Right cardiac atrium (tissue), 5 donors: ENCODE measurements at regions of chr2 and their contacts with region 1.

Region 1: GRCh38 chr2:177489719-177490301 is 97.2 kb downstream of the AGPS start:
- DNase-seq: no peak
- ATAC-seq: no peak
- H3K4me3 ChIP-seq: no peak overlapping the region
- H3K27ac ChIP-seq: no peak overlapping the region
- H3K4me1 ChIP-seq: no peaks in the 10 kb centered on the region
- H3K27me3 ChIP-seq: no peaks in the 10 kb centered on the region

Region 2: DNA sequence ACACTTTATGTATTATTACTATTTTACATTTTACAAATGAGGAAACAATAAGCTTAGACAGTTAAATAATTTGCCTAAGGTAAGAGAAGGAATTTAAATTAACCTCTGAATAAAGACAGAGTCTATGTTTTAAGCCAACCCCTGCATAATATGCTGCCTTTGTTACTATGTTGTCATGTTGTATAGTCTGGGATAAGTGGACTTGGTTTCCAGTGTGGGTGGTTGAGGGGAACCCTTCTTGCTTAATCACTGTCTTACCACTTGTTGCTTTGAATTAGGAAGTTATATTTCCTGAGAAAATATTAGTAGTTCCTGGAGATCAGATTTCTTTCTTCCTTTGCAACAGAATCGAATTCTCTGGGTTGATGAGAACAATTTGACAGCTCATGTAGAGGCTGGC is 44.6 kb before region 1 on chr2:
- intact Hi-C with region 1: no loop called
- DNase-seq: no peak
- ATAC-seq: no peak
- H3K4me3 ChIP-seq: no peak overlapping the region
- H3K27ac ChIP-seq: no peak overlapping the region
- H3K4me1 ChIP-seq: no peaks in the 10 kb centered on the region
- H3K27me3 ChIP-seq: no peaks in the 10 kb centered on the region

Region 3: GRCh38 chr2:177530561-177530960 is 40.8 kb after region 1 on chr2:
- intact Hi-C with region 1: no loop called
- DNase-seq: no peak
- ATAC-seq: no peak
- H3K4me3 ChIP-seq: no peak overlapping the region
- H3K27ac ChIP-seq: no peak overlapping the region
- H3K4me1 ChIP-seq: no peaks in the 10 kb centered on the region
- H3K27me3 ChIP-seq: no peaks in the 10 kb centered on the region

Region 4: DNA sequence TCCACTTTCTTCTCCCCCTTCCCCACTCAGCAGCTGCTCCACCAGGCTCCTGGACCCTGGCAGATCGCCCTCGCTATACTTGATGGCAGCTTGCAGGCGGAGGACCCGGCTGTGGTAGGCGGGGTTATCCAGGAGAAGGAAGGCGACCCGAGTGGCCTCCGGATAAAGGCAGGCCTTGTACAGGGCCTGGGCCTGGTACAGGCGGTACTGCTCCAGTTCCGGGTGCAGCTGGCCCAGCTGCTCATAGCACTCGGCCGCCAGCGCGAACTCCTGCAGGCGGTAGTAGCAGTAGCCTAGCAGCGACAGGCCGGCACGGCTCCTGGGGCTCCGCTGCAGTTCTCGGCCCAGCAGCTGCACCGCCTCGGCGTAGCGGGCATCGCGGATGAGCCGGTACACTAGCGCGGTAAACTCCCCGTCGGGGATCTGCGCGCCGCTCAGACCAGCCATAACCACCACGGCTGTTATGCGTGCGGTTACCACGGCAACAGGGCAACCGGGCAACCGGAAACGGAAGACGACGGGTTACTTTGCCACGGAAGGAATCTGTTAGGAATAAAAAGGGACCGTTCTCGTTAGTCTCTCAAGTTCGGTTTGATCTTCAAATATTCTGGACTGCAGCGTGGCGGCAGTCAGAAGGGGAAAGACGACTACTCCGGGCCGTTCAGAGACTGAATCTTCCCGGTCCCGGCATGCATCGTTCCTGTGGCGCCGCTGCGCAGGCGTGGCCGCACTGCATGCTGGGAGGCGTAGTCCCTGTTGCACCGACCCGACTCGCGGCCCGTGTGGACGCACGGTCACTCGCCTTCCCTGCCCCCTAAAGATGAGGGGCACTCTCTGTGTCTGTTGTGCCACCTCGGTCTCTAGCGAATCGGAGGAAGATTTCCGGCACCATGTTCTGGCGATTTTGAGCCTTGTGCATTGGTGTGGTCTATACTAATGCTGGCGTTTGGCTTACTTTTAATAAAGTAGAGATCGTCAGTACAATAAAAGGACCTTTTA is 128.7 kb after region 1 on chr2:
- intact Hi-C with region 1: loop called in 1 of 4 experiments (anchors 10 kb)
- DNase-seq: peak; percentile 93 to 97 (median 96)
- ATAC-seq: peak; percentile 98 to 99
- H3K4me3 ChIP-seq: peak overlapping the region; percentile 69
- H3K27ac ChIP-seq: peak overlapping the region; percentile 94
- H3K4me1 ChIP-seq: no peaks in the 10 kb centered on the region
- H3K27me3 ChIP-seq: no peaks in the 10 kb centered on the region

Region 5: GRCh38 chr2:177717831-177718618 is 228.2 kb after region 1 on chr2:
- intact Hi-C with region 1: loop called (anchors 10 kb)
- DNase-seq: no peak
- ATAC-seq: no peak
- H3K4me3 ChIP-seq: no peak overlapping the region
- H3K27ac ChIP-seq: no peak overlapping the region
- H3K4me1 ChIP-seq: no peaks in the 10 kb centered on the region
- H3K27me3 ChIP-seq: no peaks in the 10 kb centered on the region

Region 6: GRCh38 chr2:177724398-177725287 is 234.8 kb after region 1 on chr2:
- intact Hi-C with region 1: loop called (anchors 10 kb)
- DNase-seq: peak; percentile 29 to 64 (median 53)
- ATAC-seq: peak; percentile 51 to 81
- H3K4me3 ChIP-seq: no peak overlapping the region
- H3K27ac ChIP-seq: no peak overlapping the region
- H3K4me1 ChIP-seq: no peaks in the 10 kb centered on the region
- H3K27me3 ChIP-seq: no peaks in the 10 kb centered on the region